ENCODE measurements at regions of chr1 and their contacts with region 1.

Region 1: GRCh38 chr1:84944767-84945486 is 51.9 kb upstream of the LPAR3 start:
- DNase-seq: peak; percentile 20 to 94 (median 90)
- ATAC-seq: peak; percentile 98
- H3K4me3 ChIP-seq: peak overlapping the region; percentile 63
- H3K4me3 Mint-ChIP-seq: peak overlapping the region; percentile 72 to 93 (median 86)
- H3K27ac ChIP-seq: peak overlapping the region; percentile 89
- H3K27ac Mint-ChIP-seq: peak overlapping the region; percentile 87 to 98 (median 96)
- H3K4me1 ChIP-seq: peaks cover 5 to 9% of the 10 kb centered on the region in 2 donors
- H3K4me1 Mint-ChIP-seq: peaks cover 7 to 25% (median 12%) of the 10 kb centered on the region in 7 donors
- H3K27me3 ChIP-seq: no peaks in the 10 kb centered on the region
- H3K27me3 Mint-ChIP-seq: peaks cover 0 to 5% (median 0%) of the 10 kb centered on the region in 5 donors

Region 2: DNA sequence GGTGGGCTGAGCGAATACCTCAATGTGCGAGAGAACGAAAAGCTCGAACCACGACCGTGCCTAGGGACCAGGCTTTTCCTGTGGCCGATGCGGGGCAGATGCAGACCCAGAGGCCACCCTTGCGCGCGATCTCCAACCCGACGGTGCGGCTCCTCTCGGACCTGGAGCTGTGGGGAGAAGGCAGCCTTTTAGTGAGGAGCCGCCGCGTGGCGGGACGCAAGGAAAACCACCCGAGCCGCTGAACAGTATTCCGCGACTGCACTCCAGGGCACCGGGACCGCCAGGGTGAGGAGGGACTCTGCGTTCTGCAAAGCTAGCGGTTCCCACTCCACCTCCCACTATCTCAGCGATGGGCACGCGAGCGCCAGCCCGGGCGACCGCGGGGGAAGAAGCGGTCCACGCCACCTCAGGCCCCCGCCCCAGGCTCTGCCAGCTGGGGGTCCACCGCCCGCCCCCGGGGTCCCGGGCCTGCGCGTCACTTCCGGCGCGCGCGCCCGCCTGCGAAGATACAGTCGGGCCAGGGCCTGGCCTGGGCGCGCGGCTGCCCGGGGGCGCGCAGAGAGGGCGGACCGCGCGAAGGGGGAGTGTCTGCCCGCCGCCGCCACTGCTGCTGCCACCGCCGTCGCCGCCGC is 867.3 kb before region 1 on chr1:
- CTCF ChIA-PET with region 1: no interaction called
- POLR2A ChIA-PET with region 1: no interaction called
- intact Hi-C with region 1: loop called in 1 of 2 experiments (anchors 10 kb)
- DNase-seq: peak; percentile 64 to 79 (median 72)
- ATAC-seq: peak; percentile 97
- H3K4me3 ChIP-seq: peak overlapping the region; percentile 79
- H3K4me3 Mint-ChIP-seq: peak overlapping the region; percentile 84 to 93 (median 90)
- H3K27ac ChIP-seq: peak overlapping the region; percentile 66
- H3K27ac Mint-ChIP-seq: peak overlapping the region; percentile 23 to 87 (median 75)
- H3K4me1 ChIP-seq: peaks cover 9 to 10% of the 10 kb centered on the region in 2 donors
- H3K4me1 Mint-ChIP-seq: peaks cover 6 to 23% (median 14%) of the 10 kb centered on the region in 7 donors
- H3K27me3 ChIP-seq: no peaks in the 10 kb centered on the region
- H3K27me3 Mint-ChIP-seq: peaks cover 0 to 35% (median 0%) of the 10 kb centered on the region in 5 donors

Region 3: DNA sequence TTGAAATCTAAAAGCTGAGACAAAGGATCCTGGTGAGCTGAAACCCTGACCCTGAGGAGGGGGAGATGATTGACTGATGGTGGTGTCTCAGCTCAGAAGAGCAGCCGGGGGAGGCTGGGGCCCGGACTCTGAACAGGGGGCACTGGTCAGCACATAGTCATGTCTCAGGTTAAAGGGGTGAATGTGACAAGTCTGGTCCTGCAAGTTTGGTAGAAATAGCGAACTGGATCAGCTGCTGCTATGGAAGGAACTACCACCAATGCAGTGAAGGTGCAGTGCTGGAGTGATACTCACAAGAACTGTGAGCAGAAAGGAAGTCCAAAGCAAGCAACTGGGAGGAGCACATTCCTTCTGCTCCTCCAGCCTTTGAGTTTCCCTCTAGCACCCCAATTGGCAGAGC is 155.9 kb before region 1 on chr1:
- CTCF ChIA-PET with region 1: no interaction called
- POLR2A ChIA-PET with region 1: no interaction called
- intact Hi-C with region 1: no loop called
- DNase-seq: no peak
- ATAC-seq: no peak
- H3K4me3 ChIP-seq: no peak overlapping the region
- H3K4me3 Mint-ChIP-seq: no peak overlapping the region
- H3K27ac ChIP-seq: no peak overlapping the region
- H3K27ac Mint-ChIP-seq: no peak overlapping the region
- H3K4me1 ChIP-seq: no peaks in the 10 kb centered on the region
- H3K4me1 Mint-ChIP-seq: no peaks in the 10 kb centered on the region
- H3K27me3 ChIP-seq: no peaks in the 10 kb centered on the region
- H3K27me3 Mint-ChIP-seq: peaks cover 0 to 24% (median 0%) of the 10 kb centered on the region in 5 donors

Region 4: GRCh38 chr1:84996846-84997666 is 52.1 kb after region 1 on chr1 and contains the start of gene MCOLN2:
- CTCF ChIA-PET with region 1: interaction called, 4 read pairs
- POLR2A ChIA-PET with region 1: interaction called, 5 read pairs
- intact Hi-C with region 1: loop called (anchors 1 kb)
- DNase-seq: peak; percentile 7 to 69 (median 37)
- ATAC-seq: peak; percentile 89
- H3K4me3 ChIP-seq: peak within 1 kb of the TSS; percentile 77
- H3K4me3 Mint-ChIP-seq: peak within 1 kb of the TSS; percentile 80 to 95 (median 86)
- H3K27ac ChIP-seq: no peak within 1 kb of the TSS
- H3K27ac Mint-ChIP-seq: peak within 1 kb of the TSS in 4 of 9 donors; percentile 33 to 85 (median 66)
- H3K4me1 ChIP-seq: peaks cover 17 to 26% of the 10 kb centered on the region in 2 donors
- H3K4me1 Mint-ChIP-seq: peaks cover 13 to 57% (median 16%) of the 10 kb centered on the region in 7 donors
- H3K27me3 ChIP-seq: peaks cover 0 to 13% of the 10 kb centered on the region in 2 donors
- H3K27me3 Mint-ChIP-seq: peaks cover 28 to 55% (median 35%) of the 10 kb centered on the region in 5 donors
- total RNA-seq, gene MCOLN2: 2.5 to 35.7 (median 3.1) TPM

Region 5: DNA sequence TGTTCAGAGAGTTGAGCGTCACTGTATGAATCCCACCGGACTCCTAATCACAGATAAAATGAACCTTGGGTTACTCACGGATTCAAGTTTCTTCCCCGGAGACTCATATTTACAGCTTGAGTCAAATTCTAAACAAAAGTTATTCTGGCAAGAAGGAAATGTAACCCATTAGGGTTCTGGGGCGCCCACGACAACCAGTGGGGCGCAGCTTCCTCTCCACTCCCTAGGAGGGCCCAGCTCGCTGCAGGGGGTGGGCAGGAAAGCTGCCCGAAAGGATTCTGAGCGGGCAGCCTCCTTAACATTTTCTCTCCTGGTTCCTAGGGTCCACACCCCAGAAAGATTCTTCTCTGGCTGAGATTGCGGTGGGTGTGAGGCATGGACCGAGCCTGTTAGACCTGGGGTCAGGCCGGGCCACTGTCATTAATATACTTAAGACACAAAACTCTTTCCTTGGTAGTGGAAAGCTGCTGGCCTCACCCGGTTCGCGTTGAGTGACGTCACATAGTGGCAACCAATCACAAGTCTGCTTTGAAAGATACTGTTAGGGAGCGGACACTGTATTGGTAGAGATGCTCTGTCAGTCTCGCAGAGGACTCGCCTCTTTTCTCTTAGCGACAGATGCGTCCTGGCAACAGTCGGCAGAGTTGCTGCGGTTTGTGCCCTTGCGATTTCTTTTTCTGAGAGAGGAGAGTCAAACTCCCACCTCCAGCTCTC is 116.9 kb after region 1 on chr1:
- CTCF ChIA-PET with region 1: interaction called, 5 read pairs
- POLR2A ChIA-PET with region 1: no interaction called
- intact Hi-C with region 1: loop called (anchors 1 kb)
- DNase-seq: peak; percentile 49 to 93 (median 86)
- ATAC-seq: peak; percentile 99
- H3K4me3 ChIP-seq: peak overlapping the region; percentile 57
- H3K4me3 Mint-ChIP-seq: peak overlapping the region; percentile 79 to 93 (median 88)
- H3K27ac ChIP-seq: peak overlapping the region; percentile 24
- H3K27ac Mint-ChIP-seq: peak overlapping the region; percentile 57 to 96 (median 92)
- H3K4me1 ChIP-seq: peaks cover 4 to 6% of the 10 kb centered on the region in 2 donors
- H3K4me1 Mint-ChIP-seq: peaks cover 11 to 21% (median 14%) of the 10 kb centered on the region in 7 donors
- H3K27me3 ChIP-seq: no peaks in the 10 kb centered on the region
- H3K27me3 Mint-ChIP-seq: peaks cover 3 to 39% (median 13%) of the 10 kb centered on the region in 5 donors

Region 6: DNA sequence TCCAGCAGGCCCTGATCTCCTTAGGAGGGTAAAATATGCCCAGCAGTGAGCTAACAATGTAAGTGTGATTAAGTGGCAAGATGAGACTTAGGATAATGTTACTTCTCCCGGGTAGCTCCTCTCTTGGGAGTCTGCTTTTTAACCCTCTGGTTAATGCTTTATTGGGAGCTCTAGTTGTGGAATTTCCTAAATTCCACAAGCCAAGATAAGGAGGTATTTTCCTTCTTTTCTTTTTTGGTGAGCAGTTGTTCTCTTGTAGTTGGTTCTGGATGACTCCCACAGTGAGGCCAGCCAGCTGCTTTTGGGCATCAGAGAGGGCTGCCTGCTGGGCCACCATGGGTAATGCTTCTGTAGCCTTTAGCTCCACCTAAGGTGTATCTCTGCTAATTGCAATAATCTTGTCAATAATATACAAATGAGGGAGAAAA is 295.3 kb after region 1 on chr1:
- CTCF ChIA-PET with region 1: interaction called, 7 read pairs
- POLR2A ChIA-PET with region 1: no interaction called
- intact Hi-C with region 1: loop called in 1 of 2 experiments (anchors 1 kb)
- DNase-seq: peak in 1 of 9 donors; percentile 26
- ATAC-seq: peak; percentile 62
- H3K4me3 ChIP-seq: no peak overlapping the region
- H3K4me3 Mint-ChIP-seq: peak overlapping the region in 6 of 10 donors; percentile 17 to 51 (median 24)
- H3K27ac ChIP-seq: no peak overlapping the region
- H3K27ac Mint-ChIP-seq: peak overlapping the region in 6 of 9 donors; percentile 6 to 89 (median 79)
- H3K4me1 ChIP-seq: peaks cover 0 to 10% of the 10 kb centered on the region in 2 donors
- H3K4me1 Mint-ChIP-seq: peaks cover 1 to 22% (median 17%) of the 10 kb centered on the region in 7 donors
- H3K27me3 ChIP-seq: no peaks in the 10 kb centered on the region
- H3K27me3 Mint-ChIP-seq: peaks cover 0 to 9% (median 0%) of the 10 kb centered on the region in 5 donors

Region 7: GRCh38 chr1:85707990-85708828 is 763.3 kb after region 1 on chr1 and contains the start of gene ZNHIT6:
- CTCF ChIA-PET with region 1: no interaction called
- POLR2A ChIA-PET with region 1: interaction called, 4 read pairs
- intact Hi-C with region 1: loop called in 1 of 2 experiments (anchors 1 kb)
- DNase-seq: peak; percentile 62 to 94 (median 89)
- ATAC-seq: peak; percentile 99
- H3K4me3 ChIP-seq: peak within 1 kb of the TSS; percentile 90
- H3K4me3 Mint-ChIP-seq: no peak within 1 kb of the TSS
- H3K27ac ChIP-seq: peak within 1 kb of the TSS; percentile 77
- H3K27ac Mint-ChIP-seq: no peak within 1 kb of the TSS
- H3K4me1 ChIP-seq: peaks cover 14 to 21% of the 10 kb centered on the region in 2 donors
- H3K4me1 Mint-ChIP-seq: peaks cover 11 to 33% (median 18%) of the 10 kb centered on the region in 7 donors
- H3K27me3 ChIP-seq: no peaks in the 10 kb centered on the region
- H3K27me3 Mint-ChIP-seq: no peaks in the 10 kb centered on the region
- total RNA-seq, gene ZNHIT6: 13.8 to 22.2 (median 20.2) TPM

Measured in naive thymus-derived CD4-positive, alpha-beta T cell (primary cell).